ENCODE measurements at regions of chr5 and their contacts with region 1.

Region 1: DNA sequence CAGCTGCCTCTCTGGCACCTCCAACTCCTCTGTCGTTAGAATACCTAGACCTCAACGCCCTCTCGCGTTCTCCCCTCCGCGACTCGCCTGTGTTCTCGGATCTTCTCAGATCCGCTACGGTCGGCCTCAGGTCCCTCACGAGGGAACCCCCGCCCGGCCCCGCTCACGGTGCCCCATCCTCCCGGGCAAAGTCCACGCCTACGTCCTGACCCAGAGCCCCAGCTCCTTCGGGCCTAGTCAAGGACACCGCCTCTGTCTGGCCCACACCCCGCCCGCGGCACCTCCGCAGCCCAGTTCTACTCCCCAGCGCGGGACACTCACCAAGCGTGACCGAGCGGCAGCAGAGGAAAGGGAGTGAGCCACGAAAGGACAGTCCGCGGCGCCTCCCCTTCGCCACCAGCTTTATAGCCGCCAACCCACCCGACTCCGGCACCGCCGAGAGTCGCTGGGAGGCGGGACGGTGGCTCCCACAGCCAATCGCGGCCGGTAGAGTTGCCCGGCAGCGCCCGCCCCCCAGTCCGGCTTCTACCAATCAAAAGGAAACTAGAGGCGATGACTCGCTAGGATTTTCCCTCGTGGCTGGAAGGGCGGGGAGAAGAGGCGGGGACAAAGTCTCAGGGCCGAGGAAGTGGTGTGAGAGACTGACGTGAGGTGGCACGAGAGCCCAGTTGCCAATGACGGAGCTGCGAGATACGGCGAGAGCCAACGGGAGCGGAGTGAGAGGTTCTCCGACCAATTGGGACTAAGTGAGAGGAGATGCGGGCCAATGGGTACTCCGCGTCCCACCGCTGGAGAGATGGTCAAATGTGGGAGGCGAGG is at the start of gene HMGCS1:
- DNase-seq: peak; percentile 99
- H3K4me3 Mint-ChIP-seq: peak within 1 kb of the TSS; percentile 98
- H3K27ac Mint-ChIP-seq: peak within 1 kb of the TSS; percentile 95
- H3K4me1 Mint-ChIP-seq: peaks cover 67% of the 10 kb centered on the region
- H3K27me3 Mint-ChIP-seq: no peaks in the 10 kb centered on the region
- total RNA-seq, gene HMGCS1: 232 and 233 TPM in 2 replicates

Region 2: DNA sequence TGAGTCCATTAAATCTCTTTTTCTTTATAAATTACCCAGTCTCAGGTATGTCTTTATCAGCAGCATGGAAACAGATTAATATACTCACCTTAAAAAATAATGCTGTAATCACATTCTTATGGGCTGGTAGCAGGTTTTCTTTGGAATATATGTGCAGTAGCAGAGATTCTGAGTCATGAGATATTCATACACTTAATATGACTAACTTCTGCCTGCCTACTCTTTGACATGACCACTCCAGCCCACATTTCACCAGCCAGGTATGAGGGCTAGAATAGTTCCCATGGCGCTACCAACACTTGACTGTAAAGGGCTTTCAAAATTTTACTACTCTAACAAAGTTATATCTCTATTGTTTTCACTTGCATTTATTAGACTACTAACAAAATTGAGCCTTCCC is 964.1 kb before region 1 on chr5:
- intact Hi-C with region 1: no loop called
- DNase-seq: no peak
- H3K4me3 Mint-ChIP-seq: no peak overlapping the region
- H3K27ac Mint-ChIP-seq: no peak overlapping the region
- H3K4me1 Mint-ChIP-seq: no peaks in the 10 kb centered on the region
- H3K27me3 Mint-ChIP-seq: no peaks in the 10 kb centered on the region

Region 3: GRCh38 chr5:42994246-42995151 is 318.7 kb before region 1 on chr5:
- intact Hi-C with region 1: loop called (anchors 2 kb)
- DNase-seq: peak; percentile 86
- H3K4me3 Mint-ChIP-seq: peak overlapping the region; percentile 100
- H3K27ac Mint-ChIP-seq: peak overlapping the region; percentile 100
- H3K4me1 Mint-ChIP-seq: peaks cover 32% of the 10 kb centered on the region
- H3K27me3 Mint-ChIP-seq: no peaks in the 10 kb centered on the region

Region 4: GRCh38 chr5:43336159-43336558 is 22.9 kb after region 1 on chr5:
- intact Hi-C with region 1: loop called (anchors 2 kb)
- DNase-seq: no peak
- H3K4me3 Mint-ChIP-seq: no peak overlapping the region
- H3K27ac Mint-ChIP-seq: no peak overlapping the region
- H3K4me1 Mint-ChIP-seq: peaks cover 6% of the 10 kb centered on the region
- H3K27me3 Mint-ChIP-seq: no peaks in the 10 kb centered on the region

Region 5: DNA sequence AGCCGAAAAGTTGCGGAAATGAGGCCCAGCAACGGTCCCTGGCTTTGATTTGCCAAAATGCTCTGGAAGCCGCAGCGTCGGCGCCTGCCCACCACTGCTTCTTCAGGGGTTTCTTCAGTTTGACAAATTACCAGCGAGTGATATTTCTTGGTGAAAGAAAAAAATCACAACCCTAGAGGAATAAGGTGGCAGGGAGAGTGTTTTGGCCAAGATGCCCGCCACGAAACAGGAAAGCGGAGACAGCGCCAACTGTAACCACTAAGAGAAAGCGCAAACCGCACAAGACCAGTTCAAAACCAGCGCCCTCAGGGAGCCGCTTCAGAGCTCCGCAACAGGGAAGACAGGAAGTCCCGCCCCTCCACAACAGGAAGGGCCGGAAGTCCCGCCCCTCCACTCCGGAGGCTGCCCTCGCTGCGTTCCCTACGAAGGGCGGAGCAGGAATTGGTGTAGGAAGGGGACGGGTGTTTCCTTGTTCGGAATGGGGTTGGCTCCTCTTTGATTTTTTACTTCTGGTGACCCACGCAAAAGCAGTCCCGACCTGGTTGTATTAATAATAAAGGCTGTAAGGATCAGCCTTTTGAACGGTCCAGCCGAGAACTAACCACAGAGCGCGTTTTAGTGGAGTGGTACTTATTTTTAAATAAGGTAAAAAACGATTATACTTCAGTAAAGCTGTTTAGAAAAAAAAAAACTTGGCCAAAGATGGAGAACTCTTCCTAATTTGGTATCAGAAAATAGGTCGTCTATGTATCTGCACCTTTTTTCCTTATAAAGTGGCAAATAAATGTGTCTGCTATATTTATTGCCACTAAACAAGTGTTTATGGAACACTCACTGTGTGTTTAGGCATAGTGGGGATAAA is 201.8 kb after region 1 on chr5 and contains the start of gene C5orf34:
- intact Hi-C with region 1: loop called (anchors 2 kb)
- DNase-seq: peak; percentile 91
- H3K4me3 Mint-ChIP-seq: peak within 1 kb of the TSS; percentile 92
- H3K27ac Mint-ChIP-seq: peak within 1 kb of the TSS; percentile 96
- H3K4me1 Mint-ChIP-seq: peaks cover 34% of the 10 kb centered on the region
- H3K27me3 Mint-ChIP-seq: no peaks in the 10 kb centered on the region
- total RNA-seq, gene C5orf34: 6.3 and 8.3 TPM in 2 replicates

Region 6: DNA sequence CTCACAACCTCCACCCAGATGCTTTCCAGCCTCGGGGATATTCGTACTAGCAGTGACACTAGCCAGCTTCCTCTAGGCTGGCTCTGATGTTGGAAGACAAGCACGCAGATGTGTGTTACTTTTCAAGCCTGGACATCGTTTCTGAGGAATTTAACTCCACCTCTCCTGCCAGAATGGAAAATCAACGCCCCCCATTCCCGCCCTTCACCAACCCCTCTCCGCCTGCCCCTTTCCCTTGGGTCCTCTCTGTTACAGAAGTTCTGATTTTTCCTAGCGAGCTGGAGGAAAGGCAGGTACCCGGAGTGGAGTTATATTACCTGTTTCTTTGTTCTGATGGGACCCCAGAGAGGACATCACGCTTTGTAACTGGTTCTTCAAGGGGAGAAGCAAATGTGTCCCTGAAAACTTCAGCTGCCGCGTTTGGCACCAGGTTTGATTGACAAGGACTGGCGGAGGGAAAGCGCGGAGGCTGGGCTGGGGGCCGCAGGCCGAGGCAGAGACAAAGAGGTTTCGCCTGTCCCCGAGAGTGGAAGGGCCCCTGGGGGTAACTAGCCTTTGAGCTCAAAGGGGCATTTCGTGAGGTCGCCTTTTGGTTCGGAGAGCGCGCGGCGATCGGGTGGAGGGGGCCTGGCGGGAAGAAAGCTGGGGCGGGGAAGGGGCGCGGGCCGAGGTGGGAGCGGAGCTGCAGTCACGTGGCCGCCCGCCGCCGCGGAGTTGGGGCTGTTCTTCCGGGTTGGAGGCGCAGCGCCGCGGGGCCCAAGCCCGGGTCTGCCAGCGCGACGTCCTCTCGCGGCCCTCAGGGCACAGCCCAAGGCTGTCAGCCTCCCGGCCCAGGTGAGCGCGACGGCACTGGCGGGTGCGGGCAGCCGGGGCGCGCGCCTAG is 289.5 kb after region 1 on chr5 and contains the start of gene NNT:
- intact Hi-C with region 1: loop called (anchors 5 kb)
- DNase-seq: peak; percentile 75
- H3K4me3 Mint-ChIP-seq: peak within 1 kb of the TSS; percentile 87
- H3K27ac Mint-ChIP-seq: peak within 1 kb of the TSS; percentile 82
- H3K4me1 Mint-ChIP-seq: peaks cover 23% of the 10 kb centered on the region
- H3K27me3 Mint-ChIP-seq: no peaks in the 10 kb centered on the region
- total RNA-seq, gene NNT: 64.1 and 64.8 TPM in 2 replicates